Endothelial cell of umbilical vein (primary cell): ENCODE measurements at regions of chr10 and their contacts with region 1.

Region 1: DNA sequence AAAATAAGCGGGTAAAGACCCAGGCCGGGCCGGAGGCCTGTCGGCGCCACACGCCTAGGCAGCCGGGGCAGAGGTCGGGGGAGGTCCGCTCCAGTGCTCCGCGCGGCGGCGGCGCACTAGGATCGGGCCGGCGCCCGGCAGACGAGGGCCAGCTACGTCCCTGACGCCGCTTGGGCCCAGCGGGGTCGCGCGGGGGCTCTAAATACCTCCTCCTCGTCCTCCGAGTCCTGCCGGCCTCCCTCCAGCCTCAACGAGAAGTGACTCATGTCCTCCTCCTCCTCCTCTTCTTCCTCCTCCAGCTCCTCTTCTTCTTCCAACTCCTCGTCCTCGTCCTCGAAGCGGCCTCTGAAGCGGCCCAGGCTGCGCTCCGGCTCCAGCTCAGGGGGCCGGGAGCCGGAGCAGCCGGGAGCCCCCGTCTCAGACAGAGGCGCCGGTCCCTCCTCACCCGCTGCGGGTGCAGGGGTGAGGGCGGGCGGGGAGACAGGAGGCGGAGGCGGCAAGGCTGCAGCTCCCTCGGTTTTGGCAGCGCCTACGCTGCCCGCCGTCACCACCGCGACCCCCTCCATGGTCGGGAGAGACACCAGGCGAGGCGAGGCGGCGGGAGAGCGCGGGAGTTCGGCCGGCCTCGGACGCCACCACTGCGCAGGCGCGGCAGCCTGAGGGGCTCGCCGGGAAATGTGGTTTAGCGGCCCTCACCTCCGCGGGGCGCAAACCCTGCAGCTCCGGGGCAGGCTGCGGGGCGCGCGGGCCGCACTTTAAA is at the start of gene PCGF6:
- DNase-seq: peak; percentile 87
- H3K4me3 ChIP-seq: peak within 1 kb of the TSS; percentile 62 to 80 (median 71)
- H3K27ac ChIP-seq: peak within 1 kb of the TSS; percentile 37
- H3K4me1 ChIP-seq: peaks cover 2% of the 10 kb centered on the region
- H3K27me3 ChIP-seq: no peaks in the 10 kb centered on the region
- CTCF ChIP-seq: peak in 1 of 2 donors; percentile 9
- POLR2A ChIP-seq: peak; percentile 55
- total RNA-seq, gene PCGF6: 11.3 and 11.5 TPM in 2 replicates

Region 2: DNA sequence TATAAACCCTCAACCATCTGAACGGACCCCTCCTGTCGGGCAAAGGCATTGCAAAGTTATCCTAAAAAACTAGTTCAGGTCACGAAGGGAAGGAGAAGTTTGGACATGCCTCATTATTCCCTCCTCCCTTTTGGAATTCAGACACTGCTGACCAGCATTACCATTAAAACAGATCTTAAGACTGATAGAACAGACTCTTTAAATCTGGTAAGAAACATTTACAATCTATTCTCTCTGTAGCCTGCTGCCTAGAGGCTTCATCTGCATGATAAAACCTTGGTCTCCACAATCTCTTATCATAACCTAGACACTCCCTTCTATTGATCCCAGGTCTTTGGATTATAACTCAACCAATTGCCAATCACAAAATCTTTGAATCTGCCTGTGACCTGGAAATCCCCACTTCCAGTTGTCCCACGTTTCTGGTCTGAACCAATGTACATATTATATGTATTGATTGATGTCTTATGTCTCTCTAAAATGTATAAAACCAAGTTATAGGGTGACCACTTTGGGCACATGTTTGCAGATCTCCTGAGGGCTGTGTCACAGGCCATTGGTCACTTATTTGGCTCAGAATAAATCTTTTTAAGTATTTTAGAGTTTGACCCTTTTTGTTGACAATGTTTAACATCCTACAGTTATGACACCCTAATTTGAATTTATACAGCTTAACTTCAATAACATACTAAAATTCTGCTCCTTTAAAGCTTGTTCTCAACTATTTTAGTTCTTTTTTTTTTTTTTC is 456.0 kb before region 1 on chr10:
- CTCF ChIA-PET with region 1: no interaction called
- POLR2A ChIA-PET with region 1: no interaction called
- dilution Hi-C with region 1: no loop called
- intact Hi-C with region 1: no loop called
- DNase-seq: no peak
- H3K4me3 ChIP-seq: no peak overlapping the region
- H3K27ac ChIP-seq: no peak overlapping the region
- H3K4me1 ChIP-seq: no peaks in the 10 kb centered on the region
- H3K27me3 ChIP-seq: no peaks in the 10 kb centered on the region
- CTCF ChIP-seq: no peak
- POLR2A ChIP-seq: no peak

Region 3: DNA sequence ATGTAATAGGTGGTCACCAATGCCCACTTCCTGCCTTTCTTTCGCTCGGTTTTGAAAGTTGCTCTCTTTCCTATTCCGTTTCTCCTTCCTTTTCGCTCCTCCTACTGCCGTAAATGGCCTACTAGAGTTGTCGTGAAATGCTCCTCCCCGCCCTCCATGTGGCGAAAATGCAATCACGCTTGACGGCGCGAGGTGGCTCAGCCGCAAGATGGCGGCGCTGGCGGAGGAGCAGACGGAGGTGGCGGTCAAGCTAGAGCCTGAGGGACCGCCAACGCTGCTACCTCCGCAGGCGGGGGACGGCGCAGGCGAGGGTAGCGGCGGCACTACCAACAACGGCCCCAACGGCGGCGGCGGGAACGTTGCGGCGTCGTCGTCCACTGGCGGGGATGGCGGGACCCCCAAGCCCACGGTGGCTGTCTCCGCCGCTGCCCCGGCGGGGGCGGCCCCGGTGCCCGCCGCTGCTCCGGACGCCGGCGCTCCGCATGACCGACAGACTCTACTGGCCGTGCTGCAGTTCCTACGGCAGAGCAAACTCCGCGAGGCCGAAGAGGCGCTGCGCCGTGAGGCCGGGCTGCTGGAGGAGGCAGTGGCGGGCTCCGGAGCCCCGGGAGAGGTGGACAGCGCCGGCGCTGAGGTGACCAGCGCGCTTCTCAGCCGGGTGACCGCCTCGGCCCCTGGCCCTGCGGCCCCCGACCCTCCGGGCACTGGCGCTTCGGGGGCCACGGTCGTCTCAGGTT is 17.3 kb after region 1 on chr10 and contains the start of gene TAF5:
- CTCF ChIA-PET with region 1: interaction called, 4 read pairs
- POLR2A ChIA-PET with region 1: no interaction called
- dilution Hi-C with region 1: no loop called
- intact Hi-C with region 1: loop called (anchors 1 kb)
- DNase-seq: peak; percentile 96
- H3K4me3 ChIP-seq: peak within 1 kb of the TSS; percentile 90 to 97 (median 91)
- H3K27ac ChIP-seq: no peak within 1 kb of the TSS
- H3K4me1 ChIP-seq: peaks cover 8% of the 10 kb centered on the region
- H3K27me3 ChIP-seq: no peaks in the 10 kb centered on the region
- CTCF ChIP-seq: no peak
- POLR2A ChIP-seq: peak; percentile 81
- total RNA-seq, gene TAF5: 5.8 and 6.0 TPM in 2 replicates

Region 4: GRCh38 chr10:103396064-103396788 is 45.5 kb after region 1 on chr10 and contains the starts of genes ATP5MK and PDCD11:
- CTCF ChIA-PET with region 1: no interaction called
- POLR2A ChIA-PET with region 1: no interaction called
- dilution Hi-C with region 1: no loop called
- intact Hi-C with region 1: loop called (anchors 1 kb)
- DNase-seq: peak; percentile 99
- H3K4me3 ChIP-seq: peak within 1 kb of the TSS; percentile 65 to 89 (median 81)
- H3K27ac ChIP-seq: peak within 1 kb of the TSS; percentile 70
- H3K4me1 ChIP-seq: peaks cover 16% of the 10 kb centered on the region
- H3K27me3 ChIP-seq: no peaks in the 10 kb centered on the region
- CTCF ChIP-seq: peak in 1 of 2 donors; percentile 31
- POLR2A ChIP-seq: peak; percentile 96
- total RNA-seq, gene ATP5MK: 369 and 407 TPM in 2 replicates
- total RNA-seq, gene PDCD11: 52.7 and 56.2 TPM in 2 replicates